Sciatic nerve (tissue), 2 donors: ENCODE measurements at regions of chr1 and their contacts with region 1.

Region 1: GRCh38 chr1:38941527-38942019 is at the start of gene RHBDL2:
- DNase-seq: peak; percentile 63
- ATAC-seq: peak; percentile 91
- total RNA-seq, gene RHBDL2: 0.22 TPM

Region 2: DNA sequence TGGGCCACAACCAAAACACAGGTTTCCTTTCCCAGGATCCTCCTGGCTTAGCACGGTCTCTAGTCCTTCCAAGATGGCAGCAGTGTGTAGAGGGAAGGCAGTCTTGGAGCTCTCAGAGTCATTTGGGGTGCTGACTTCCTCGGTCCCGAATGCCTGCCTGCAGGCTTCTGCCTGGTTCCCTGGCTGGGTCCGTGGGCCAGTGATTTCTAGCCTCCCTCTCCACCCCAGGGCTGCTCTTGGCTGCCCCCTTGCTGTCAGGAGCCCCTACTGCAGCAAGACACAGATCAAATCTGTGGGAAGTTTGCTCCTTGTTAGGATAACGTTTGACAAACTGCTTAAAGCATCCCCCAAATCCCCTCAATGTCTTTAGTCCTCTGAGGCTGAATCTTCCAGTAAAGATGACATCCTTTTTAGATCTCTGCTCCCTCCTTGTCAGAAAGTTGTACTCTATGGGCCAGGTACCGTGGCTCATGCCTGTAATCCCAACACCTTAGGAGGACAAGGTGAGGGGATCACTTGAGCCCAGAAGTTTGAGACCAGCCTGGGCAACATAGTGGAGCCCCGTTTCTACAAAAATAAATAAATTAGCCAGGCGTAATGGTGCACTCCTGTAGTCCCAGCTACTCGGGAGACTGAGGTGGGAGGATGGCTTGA is 354.5 kb before region 1 on chr1:
- intact Hi-C with region 1: no loop called
- DNase-seq: no peak
- ATAC-seq: peak; percentile 34

Region 3: GRCh38 chr1:38741341-38741740 is 200.2 kb before region 1 on chr1:
- intact Hi-C with region 1: no loop called
- DNase-seq: no peak
- ATAC-seq: no peak

Region 4: GRCh38 chr1:38908821-38909220 is 32.8 kb before region 1 on chr1:
- intact Hi-C with region 1: loop called (anchors 1 kb)
- DNase-seq: no peak
- ATAC-seq: no peak

Region 5: GRCh38 chr1:39091845-39092645 is 150.5 kb after region 1 on chr1:
- intact Hi-C with region 1: no loop called
- DNase-seq: peak; percentile 84
- ATAC-seq: peak; percentile 81